ENCODE measurements at regions of chr2 and their contacts with region 1.

Region 1: DNA sequence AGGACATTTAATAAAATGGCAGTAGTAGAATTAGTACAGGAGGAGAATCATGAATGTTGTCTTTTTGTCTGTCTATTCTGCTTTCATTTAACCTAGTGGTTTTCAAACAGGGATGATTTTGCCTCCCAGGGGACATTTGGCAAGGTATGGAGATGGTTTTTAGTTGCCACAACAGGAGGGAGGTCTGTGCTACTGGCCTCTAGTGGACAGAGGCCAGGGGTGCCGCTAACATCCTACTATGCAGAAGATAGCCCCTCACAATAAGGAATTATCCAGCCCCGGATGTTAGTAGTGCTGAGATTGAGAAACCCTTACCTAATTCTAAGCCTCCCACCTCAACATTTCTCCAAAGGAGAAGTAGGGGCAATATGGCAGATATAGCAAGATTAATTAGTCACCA is 18.3 kb downstream of the FASTKD2 start:
- DNase-seq: peak in 1 of 2 experiments; percentile 28
- H3K4me3 ChIP-seq: no peak overlapping the region
- H3K4me3 Mint-ChIP-seq: no peak overlapping the region
- H3K27ac Mint-ChIP-seq: no peak overlapping the region
- H3K4me1 ChIP-seq: no peaks in the 10 kb centered on the region
- H3K4me1 Mint-ChIP-seq: no peaks in the 10 kb centered on the region
- H3K27me3 ChIP-seq: no peaks in the 10 kb centered on the region
- H3K27me3 Mint-ChIP-seq: no peaks in the 10 kb centered on the region
- CTCF ChIP-seq: peak; percentile 60 to 84

Region 2: DNA sequence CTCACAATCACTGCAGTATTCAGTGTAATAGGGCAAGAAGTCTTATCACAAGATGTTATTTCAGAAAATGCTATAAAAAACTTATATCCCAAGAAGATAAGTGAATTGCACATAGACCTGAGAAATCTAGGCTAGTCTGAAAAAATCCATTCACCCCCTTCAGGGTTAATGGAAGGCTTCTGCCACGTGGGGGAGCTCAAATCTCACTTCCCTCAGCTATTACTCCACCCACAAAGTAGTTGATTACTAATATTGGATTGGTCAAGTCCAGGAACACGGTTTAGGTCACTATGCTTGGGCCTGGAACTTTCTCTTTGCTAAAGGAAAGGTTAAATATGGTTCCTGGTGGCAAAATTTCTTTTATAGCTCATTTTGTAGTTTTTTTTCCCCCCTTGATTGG is 391.6 kb before region 1 on chr2:
- CTCF ChIA-PET with region 1: no interaction called
- POLR2A ChIA-PET with region 1: no interaction called
- intact Hi-C with region 1: loop called (anchors 1 kb)
- DNase-seq: peak; percentile 46 to 68
- H3K4me3 ChIP-seq: no peak overlapping the region
- H3K4me3 Mint-ChIP-seq: no peak overlapping the region
- H3K27ac Mint-ChIP-seq: no peak overlapping the region
- H3K4me1 ChIP-seq: no peaks in the 10 kb centered on the region
- H3K4me1 Mint-ChIP-seq: peaks cover 4% of the 10 kb centered on the region
- H3K27me3 ChIP-seq: no peaks in the 10 kb centered on the region
- H3K27me3 Mint-ChIP-seq: no peaks in the 10 kb centered on the region
- CTCF ChIP-seq: peak; percentile 73 to 85

Region 3: DNA sequence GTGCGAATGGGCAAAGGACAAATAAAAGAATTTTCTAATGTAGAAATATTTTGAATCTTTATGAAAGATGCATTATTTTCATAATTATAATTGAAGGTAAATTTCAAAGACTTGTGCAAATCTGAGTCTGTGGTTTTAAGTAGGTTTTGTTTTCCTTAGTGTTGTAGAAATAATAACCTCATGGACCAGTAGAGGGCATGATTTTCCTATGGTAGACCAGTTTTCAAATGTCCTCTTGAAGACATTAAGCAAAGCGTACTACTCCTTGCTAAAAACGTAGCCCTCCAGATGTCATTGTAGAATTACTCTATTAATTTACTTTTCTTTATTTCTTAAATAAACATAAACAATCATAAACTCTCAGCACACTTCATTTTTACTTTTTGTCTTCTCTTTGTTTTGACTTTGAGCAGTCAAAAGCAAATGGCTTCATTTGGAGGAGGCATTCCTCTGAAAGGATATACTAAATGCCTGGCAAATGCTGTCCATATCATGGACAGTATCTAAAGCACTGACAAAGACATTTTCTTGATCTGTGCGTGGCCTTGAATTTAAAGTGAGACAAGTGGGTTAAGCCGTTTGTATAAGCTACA is 227.3 kb before region 1 on chr2:
- CTCF ChIA-PET with region 1: no interaction called
- POLR2A ChIA-PET with region 1: no interaction called
- intact Hi-C with region 1: loop called (anchors 2 kb)
- DNase-seq: peak in 1 of 2 experiments; percentile 30
- H3K4me3 ChIP-seq: no peak overlapping the region
- H3K4me3 Mint-ChIP-seq: no peak overlapping the region
- H3K27ac Mint-ChIP-seq: no peak overlapping the region
- H3K4me1 ChIP-seq: no peaks in the 10 kb centered on the region
- H3K4me1 Mint-ChIP-seq: no peaks in the 10 kb centered on the region
- H3K27me3 ChIP-seq: no peaks in the 10 kb centered on the region
- H3K27me3 Mint-ChIP-seq: no peaks in the 10 kb centered on the region
- CTCF ChIP-seq: peak; percentile 43 to 56

Region 4: DNA sequence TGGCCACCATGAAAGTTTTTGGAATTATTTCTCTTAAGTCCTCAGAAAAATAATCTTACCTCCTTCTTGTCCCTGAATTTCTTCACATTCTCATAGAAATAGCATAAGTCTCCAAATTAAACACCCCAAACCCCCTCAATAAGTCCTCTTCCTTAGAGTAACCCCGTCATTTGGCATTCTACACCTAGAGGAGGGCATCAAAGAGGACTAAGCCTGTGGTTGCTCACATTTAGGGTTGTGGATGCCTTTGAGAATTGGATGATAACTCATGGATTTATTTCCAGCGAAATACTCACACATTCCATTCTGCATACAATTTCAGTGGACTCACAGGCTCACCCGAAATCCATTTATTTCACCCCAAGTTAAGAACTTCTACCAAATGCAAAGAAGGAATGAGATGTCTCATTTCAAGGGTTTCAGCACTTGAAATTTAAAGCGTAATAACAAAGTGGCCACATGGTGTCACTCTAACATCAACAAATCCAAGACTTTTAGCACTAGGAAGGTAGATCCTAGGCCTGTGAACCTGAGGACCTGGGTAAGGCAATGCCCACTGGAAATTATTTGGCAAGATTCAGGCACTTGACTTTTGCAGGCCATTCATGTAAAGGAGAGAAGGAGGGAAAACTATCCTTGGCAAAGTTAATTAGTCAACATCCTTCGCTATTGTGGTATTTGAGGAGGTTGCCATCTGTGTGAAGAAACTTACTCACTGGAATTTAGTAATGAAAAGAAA is 90.2 kb before region 1 on chr2:
- CTCF ChIA-PET with region 1: interaction called, 4 read pairs
- POLR2A ChIA-PET with region 1: no interaction called
- intact Hi-C with region 1: loop called (anchors 1 kb)
- DNase-seq: peak in 1 of 2 experiments; percentile 62
- H3K4me3 ChIP-seq: no peak overlapping the region
- H3K4me3 Mint-ChIP-seq: no peak overlapping the region
- H3K27ac Mint-ChIP-seq: no peak overlapping the region
- H3K4me1 ChIP-seq: no peaks in the 10 kb centered on the region
- H3K4me1 Mint-ChIP-seq: no peaks in the 10 kb centered on the region
- H3K27me3 ChIP-seq: peaks cover 1% of the 10 kb centered on the region; the same call in 1 of the 2 replicates
- H3K27me3 Mint-ChIP-seq: peaks cover 27% of the 10 kb centered on the region
- CTCF ChIP-seq: peak; percentile 52 to 66

Region 5: GRCh38 chr2:206765242-206766056 is 18.3 kb before region 1 on chr2 and contains the starts of genes FASTKD2 and MDH1B:
- CTCF ChIA-PET with region 1: no interaction called
- POLR2A ChIA-PET with region 1: no interaction called
- intact Hi-C with region 1: loop called (anchors 1 kb)
- DNase-seq: peak; percentile 86 to 88
- H3K4me3 ChIP-seq: peak within 1 kb of the TSS; percentile 66
- H3K4me3 Mint-ChIP-seq: peak within 1 kb of the TSS; percentile 82
- H3K27ac Mint-ChIP-seq: peak within 1 kb of the TSS; percentile 93
- H3K4me1 ChIP-seq: no peaks in the 10 kb centered on the region
- H3K4me1 Mint-ChIP-seq: peaks cover 8% of the 10 kb centered on the region
- H3K27me3 ChIP-seq: no peaks in the 10 kb centered on the region
- H3K27me3 Mint-ChIP-seq: peaks cover 3% of the 10 kb centered on the region
- CTCF ChIP-seq: no peak
- total RNA-seq, gene FASTKD2: 29.8 and 30.3 TPM in 2 replicates
- total RNA-seq, gene MDH1B: 0.34 and 0.39 TPM in 2 replicates